ENCODE measurements at regions of chr4 and their contacts with region 1.

Region 1: GRCh38 chr4:40056716-40057585 is at the start of gene N4BP2:
- DNase-seq: peak; percentile 92 to 94
- ATAC-seq: peak; percentile 92
- H3K4me3 ChIP-seq: peak within 1 kb of the TSS; percentile 49 to 77
- H3K27ac ChIP-seq: peak within 1 kb of the TSS; percentile 77 to 97
- H3K4me1 ChIP-seq: peaks cover 0 to 2% of the 10 kb centered on the region in 2 donors
- H3K27me3 ChIP-seq: no peaks in the 10 kb centered on the region
- total RNA-seq, gene N4BP2: 7.0 to 7.2 TPM

Region 2: DNA sequence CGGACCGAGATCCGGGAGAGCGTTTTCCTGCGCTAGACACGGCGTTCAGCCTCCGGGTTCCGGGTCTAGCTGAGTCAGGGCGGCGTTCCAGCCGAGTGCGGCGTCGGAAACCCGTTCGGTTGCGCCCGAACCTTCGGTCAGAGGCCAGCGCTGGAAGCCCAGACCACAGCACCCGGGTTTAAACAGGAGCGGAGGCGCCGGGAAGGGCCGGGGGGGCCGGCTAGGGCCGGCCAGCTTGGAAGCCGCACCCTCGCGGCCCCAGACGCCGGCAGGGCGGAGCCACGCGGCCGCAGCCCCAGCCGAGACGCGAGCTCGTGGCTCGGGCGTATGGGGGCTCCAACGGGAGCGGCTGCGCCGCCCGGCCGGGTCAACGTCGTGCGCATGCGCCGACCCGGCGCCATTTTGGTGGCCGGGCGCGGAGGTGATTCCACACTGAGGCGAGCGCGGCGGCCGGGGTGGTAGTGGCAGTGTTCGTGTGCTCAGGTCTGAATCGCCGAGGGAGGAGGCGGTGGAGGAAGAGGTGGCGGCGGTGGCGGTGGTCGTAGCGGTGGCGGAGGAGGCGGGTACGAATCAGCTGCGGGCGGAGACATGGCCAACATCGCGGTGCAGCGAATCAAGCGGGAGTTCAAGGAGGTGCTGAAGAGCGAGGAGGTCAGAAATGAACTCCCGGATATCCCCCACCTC is 359.1 kb before region 1 on chr4 and contains the start of gene UBE2K:
- intact Hi-C with region 1: loop called (anchors 5 to 10 kb)
- DNase-seq: peak; percentile 93 to 97
- ATAC-seq: peak; percentile 99
- H3K4me3 ChIP-seq: peak within 1 kb of the TSS; percentile 59 to 74
- H3K27ac ChIP-seq: peak within 1 kb of the TSS; percentile 25 to 92
- H3K4me1 ChIP-seq: no peaks in the 10 kb centered on the region
- H3K27me3 ChIP-seq: no peaks in the 10 kb centered on the region
- total RNA-seq, gene UBE2K: 56.8 to 59.5 TPM

Region 3: DNA sequence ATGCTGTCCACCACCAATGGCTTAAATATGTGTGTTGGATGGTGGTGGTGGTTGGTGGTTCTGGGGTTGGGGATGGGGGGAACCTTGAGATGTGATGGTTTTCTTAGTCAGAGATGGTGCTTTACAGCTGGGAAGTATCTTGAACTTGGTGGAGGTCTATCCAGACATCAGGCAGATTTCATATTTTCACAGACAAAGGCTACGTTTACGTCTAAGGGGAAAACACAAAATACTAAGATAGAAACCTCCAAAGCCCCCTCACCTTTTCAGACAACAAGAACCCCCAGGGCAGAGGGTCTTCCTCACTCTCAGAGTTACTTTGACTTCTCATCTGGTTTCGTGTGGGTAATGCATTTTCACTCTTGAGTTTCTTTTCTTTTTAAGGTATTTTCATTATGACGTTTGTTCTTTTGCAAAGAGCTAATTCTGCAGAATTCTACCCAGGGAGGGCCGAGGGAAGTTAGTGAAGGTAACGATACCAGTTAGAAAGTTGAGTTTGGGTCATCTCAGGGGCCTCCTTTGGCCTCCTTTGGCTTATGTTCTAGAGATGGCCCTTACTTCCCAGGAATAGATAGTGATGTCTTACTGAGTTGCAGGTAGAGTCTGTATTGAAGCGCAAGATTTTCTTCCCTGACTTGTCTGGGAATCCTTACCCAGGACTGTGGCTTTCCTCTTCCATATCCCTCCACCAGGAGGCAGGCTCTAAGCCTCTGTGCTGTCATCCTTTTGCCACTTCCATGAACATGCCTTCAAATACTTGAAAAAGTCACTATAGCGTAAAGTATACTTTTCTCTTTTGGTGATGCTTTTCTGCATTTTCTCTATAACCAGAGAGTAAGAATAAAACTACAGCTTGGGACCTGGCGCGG is 171.8 kb after region 1 on chr4:
- intact Hi-C with region 1: no loop called
- DNase-seq: no peak
- ATAC-seq: no peak
- H3K4me3 ChIP-seq: no peak overlapping the region
- H3K27ac ChIP-seq: no peak overlapping the region
- H3K4me1 ChIP-seq: no peaks in the 10 kb centered on the region
- H3K27me3 ChIP-seq: no peaks in the 10 kb centered on the region

Region 4: DNA sequence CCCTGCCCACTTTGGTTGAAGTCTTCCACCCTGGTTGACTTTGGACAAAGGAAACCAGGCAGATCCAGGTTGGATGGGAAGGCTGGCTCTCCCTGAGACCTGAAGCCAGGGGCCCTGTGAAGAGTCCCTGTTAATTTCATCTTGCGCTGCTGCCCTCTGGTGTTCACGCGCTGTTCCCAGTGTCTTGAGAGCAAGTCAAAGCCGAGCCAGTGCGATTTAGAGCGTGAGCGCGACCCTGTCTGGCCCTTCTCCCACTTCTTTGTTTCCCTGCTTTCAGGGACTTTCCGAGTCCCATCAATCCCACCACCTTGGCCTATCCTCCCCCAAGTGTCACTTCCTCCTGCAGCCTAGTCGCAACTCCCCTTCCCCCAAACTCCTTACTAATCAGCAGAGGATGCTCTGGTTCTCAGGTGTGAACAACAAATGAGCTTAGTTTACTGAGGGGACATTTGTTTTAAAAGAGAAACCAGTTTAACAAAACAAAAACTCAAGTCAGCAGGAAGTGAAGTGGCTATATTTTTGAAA is 252.4 kb after region 1 on chr4:
- intact Hi-C with region 1: loop called in 1 of 2 experiments (anchors 2 kb)
- DNase-seq: peak; percentile 92 to 96
- ATAC-seq: peak; percentile 86
- H3K4me3 ChIP-seq: no peak overlapping the region
- H3K27ac ChIP-seq: no peak overlapping the region
- H3K4me1 ChIP-seq: no peaks in the 10 kb centered on the region
- H3K27me3 ChIP-seq: peaks cover 0 to 2% of the 10 kb centered on the region in 2 donors

Region 5: GRCh38 chr4:40316782-40317635 is 260.1 kb after region 1 on chr4:
- intact Hi-C with region 1: loop called in 1 of 2 experiments (anchors 5 kb)
- DNase-seq: peak in 1 of 2 donors; percentile 58
- ATAC-seq: peak; percentile 91
- H3K4me3 ChIP-seq: peak overlapping the region; percentile 23 to 75
- H3K27ac ChIP-seq: peak overlapping the region in 1 of 2 donors; percentile 62
- H3K4me1 ChIP-seq: no peaks in the 10 kb centered on the region
- H3K27me3 ChIP-seq: no peaks in the 10 kb centered on the region